Activated CD4-positive, alpha-beta T cell treated with anti-CD3 and anti-CD28 coated beads for 36 hours (primary cell): ENCODE measurements at regions of chr16 and their contacts with region 1.

Region 1: DNA sequence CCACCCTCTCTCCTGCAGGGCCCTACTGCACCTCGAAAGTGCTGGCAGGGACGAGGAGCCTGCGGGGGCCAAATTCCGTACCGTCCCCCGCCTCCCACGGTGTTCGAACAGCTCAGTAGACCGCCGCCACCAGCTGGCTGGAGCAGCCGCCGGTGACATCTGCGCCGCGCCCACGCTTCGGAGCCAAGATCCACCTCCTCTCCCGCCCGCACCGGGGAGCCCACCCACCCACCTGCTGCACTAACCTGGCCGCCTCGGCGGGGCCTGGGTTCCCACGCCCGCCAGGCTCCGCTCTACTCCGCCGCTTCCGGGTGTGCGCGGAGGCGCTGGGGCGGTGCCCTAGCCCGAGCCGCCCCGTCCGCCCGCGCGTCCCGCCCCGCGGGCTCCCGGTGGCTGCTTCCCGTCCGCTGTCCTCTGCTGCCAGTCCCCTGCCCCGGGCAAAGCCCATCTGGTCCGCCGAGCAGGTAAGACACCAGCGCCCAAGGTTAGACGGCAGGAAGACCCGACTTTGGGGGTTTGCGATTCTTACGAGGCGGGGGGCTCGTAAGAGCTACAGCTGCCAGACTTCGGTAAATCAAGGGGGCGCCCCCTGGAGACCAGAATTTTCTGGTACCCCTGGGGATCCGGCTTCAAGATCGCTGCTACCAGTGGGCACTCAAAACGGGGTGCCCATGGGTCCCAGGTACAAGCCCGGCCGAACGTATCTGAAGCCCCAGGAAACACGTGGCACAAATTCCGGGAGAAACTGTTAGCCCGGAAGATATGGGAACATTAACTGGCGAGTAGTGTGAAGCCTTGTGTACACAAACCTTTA is at the starts of genes FBXL8 and TRADD:
- DNase-seq: peak; percentile 88
- ATAC-seq: peak; percentile 63
- H3K4me3 Mint-ChIP-seq: peak within 1 kb of the TSS; percentile 91
- H3K27ac Mint-ChIP-seq: peak within 1 kb of the TSS; percentile 93
- H3K4me1 Mint-ChIP-seq: peaks cover 48% of the 10 kb centered on the region
- H3K27me3 Mint-ChIP-seq: peaks cover 12% of the 10 kb centered on the region
- total RNA-seq, gene FBXL8: 15.5 to 21.0 TPM
- total RNA-seq, gene TRADD: 22.0 to 34.0 TPM

Region 2: GRCh38 chr16:66947302-66948065 is 212.3 kb before region 1 on chr16:
- CTCF ChIA-PET with region 1: interaction called, 10 read pairs
- POLR2A ChIA-PET with region 1: interaction called, 4 read pairs
- intact Hi-C with region 1: loop called (anchors 2 kb)
- DNase-seq: peak; percentile 92
- ATAC-seq: peak; percentile 92
- H3K4me3 Mint-ChIP-seq: peak overlapping the region; percentile 67
- H3K27ac Mint-ChIP-seq: no peak overlapping the region
- H3K4me1 Mint-ChIP-seq: peaks cover 22% of the 10 kb centered on the region
- H3K27me3 Mint-ChIP-seq: peaks cover 29% of the 10 kb centered on the region

Region 3: DNA sequence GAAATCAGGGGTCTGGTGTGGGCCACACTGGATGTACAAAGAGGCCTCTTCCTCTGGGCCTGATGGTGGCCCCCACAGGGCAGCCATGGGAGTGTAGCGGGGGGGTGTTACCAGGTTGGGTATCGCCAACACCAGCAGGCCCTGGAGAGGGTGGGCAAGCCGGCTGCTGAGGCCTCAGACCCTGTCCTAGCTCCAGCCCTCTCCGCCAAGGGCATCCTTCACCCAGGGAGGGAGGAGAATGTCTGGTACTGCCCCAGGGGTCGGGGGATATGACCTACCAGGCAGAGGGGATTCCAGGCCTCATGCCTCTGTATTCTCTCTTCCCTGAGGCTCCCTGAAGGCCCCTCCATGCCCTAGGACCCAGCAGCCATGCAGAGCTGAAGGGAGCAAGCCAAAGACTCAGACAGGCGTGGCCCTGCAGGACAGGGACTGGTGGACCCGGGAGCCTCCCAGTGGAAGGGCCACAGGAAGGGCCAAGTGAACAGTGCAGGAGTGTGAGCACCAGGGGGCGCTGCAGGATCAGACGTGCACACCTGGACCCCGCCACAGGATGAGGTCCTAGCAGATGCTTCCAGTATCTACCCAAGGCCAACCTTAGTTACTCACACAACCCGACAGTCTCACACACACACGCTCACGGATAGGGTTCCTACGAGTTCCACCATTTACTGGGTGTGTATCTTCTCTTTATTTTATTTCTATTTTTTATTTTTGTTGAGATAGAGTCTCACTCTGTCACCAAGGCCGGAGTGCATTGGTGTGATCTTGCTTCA is 182.3 kb before region 1 on chr16:
- CTCF ChIA-PET with region 1: interaction called, 14 read pairs
- POLR2A ChIA-PET with region 1: no interaction called
- intact Hi-C with region 1: loop called (anchors 1 kb)
- DNase-seq: peak; percentile 96
- ATAC-seq: peak; percentile 97
- H3K4me3 Mint-ChIP-seq: no peak overlapping the region
- H3K27ac Mint-ChIP-seq: peak overlapping the region; percentile 31
- H3K4me1 Mint-ChIP-seq: peaks cover 31% of the 10 kb centered on the region
- H3K27me3 Mint-ChIP-seq: peaks cover 3% of the 10 kb centered on the region

Region 4: DNA sequence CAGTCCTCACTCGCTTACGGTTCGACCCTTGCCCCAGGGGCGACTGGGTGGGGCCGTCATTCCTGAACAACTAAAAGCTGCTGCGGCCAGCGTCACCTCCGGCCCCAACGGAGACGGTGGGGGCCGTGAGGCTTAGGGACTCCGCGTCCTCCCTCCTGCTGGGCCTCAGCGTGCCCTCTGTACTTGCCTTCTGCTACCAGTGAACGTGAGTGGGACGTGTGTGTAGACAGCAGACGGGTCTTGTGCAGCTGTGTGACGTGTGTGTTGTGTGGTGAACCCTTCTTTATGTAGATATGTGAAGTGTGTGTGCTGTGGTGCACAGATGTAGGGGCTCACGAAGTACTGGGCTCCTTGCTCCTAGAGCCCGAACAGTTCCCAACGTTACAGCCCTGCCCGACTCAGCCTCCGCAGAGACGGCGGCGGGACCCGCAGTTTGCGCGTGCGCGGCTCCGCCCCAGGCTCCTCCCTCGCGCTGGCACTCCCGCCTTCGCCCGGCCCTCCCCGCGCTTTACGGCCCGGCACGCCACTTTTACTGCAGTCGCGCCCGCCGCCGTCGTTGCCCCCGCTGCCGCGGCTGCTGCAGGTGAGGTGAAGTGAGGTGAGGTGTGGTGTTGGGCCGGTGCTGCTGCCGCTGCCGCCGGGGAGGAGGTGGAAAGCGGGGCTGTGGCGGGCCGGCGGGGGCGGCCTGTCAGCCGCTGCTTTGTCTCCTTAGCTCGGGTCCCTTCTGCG is 50.2 kb before region 1 on chr16 and contains the start of gene PHAF1:
- CTCF ChIA-PET with region 1: interaction called, 9 read pairs
- POLR2A ChIA-PET with region 1: no interaction called
- intact Hi-C with region 1: loop called (anchors 1 to 5 kb)
- DNase-seq: peak; percentile 98
- ATAC-seq: peak; percentile 94
- H3K4me3 Mint-ChIP-seq: peak within 1 kb of the TSS; percentile 94
- H3K27ac Mint-ChIP-seq: peak within 1 kb of the TSS; percentile 85
- H3K4me1 Mint-ChIP-seq: peaks cover 24% of the 10 kb centered on the region
- H3K27me3 Mint-ChIP-seq: no peaks in the 10 kb centered on the region
- total RNA-seq, gene PHAF1: 12.7 to 14.0 TPM

Region 5: DNA sequence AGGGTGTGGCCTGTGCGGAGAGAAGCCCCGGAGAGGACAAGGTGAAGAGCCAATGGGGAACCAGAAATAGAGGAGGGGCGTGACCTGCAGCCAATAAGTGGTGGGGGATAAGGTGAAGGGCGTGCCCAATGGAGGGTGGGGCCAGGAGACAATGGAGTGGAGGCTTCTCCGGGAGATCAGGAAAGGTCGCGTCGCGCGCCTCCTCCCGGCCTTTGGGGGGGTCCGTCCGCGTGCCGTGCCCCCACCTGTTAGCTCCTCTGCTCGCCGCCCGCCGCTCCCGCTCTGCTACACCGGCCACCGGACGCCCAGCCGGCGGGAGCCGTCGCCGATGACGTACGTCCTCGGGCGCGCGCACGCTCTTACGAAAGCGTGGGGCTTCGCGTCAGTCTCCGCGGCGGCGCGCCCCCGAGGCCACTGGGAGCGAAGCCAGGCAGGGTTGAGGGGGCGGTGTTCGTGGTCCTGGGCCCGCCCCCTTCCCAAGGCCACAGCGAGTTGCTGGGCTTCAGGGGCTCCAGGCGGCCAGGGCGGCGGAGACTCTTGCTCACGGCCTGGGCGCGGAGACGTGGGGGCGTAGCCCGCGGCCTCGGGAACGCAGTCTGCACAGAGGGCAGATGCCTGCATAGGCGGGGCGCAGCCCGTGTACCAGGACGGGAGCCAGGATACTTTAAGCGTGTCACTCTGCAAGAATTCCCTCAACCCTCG is 24.0 kb after region 1 on chr16 and contains the start of gene MATCAP1:
- CTCF ChIA-PET with region 1: interaction called, 14 read pairs
- POLR2A ChIA-PET with region 1: interaction called, 3 read pairs
- intact Hi-C with region 1: loop called (anchors 1 kb)
- DNase-seq: peak; percentile 96
- ATAC-seq: peak; percentile 97
- H3K4me3 Mint-ChIP-seq: no peak within 1 kb of the TSS
- H3K27ac Mint-ChIP-seq: no peak within 1 kb of the TSS
- H3K4me1 Mint-ChIP-seq: peaks cover 15% of the 10 kb centered on the region
- H3K27me3 Mint-ChIP-seq: peaks cover 9% of the 10 kb centered on the region
- total RNA-seq, gene MATCAP1: 28.8 to 30.4 TPM

Region 6: DNA sequence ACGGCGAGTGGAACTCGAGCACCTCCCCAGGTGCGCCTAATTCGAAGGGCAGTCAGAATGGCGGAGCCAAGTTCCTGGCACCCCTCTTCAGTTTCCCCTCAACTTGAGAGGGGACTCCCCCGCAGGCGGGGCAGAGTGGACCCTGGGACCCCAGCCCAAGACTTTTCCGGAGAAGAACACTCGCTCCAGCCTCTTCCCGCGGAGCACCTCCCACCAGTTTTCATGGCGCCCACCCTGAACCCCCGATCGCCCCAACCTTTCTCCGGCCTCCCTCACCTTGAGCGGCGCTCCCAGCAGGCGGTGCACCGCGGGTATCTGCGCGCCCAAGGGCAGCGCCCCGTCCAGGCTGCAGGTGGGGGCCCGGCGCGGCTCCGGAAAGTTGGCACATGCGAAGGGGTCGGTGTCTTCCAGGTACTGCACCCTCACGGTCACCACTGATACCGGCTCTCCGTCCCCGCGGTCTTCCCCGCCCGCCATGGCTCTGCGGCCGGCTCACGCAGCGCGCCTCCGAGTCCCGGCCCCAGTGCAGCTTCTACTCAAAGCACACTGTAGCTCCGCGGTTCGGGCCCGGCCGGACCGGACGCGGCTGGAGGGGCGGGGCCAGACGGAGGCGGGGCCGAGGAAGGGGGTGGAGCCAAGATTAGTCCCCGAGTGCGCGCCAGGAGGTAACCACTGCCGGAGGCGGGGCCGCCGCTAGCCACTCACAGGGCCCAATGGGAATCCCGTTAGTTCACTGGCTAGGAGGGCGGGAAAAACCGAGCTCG is 87.3 kb after region 1 on chr16 and contains the start of gene FHOD1:
- CTCF ChIA-PET with region 1: interaction called, 5 read pairs
- POLR2A ChIA-PET with region 1: interaction called, 5 read pairs
- intact Hi-C with region 1: loop called in 1 of 2 experiments (anchors 1 kb)
- DNase-seq: peak; percentile 99
- ATAC-seq: peak; percentile 74
- H3K4me3 Mint-ChIP-seq: peak within 1 kb of the TSS; percentile 87
- H3K27ac Mint-ChIP-seq: peak within 1 kb of the TSS; percentile 85
- H3K4me1 Mint-ChIP-seq: peaks cover 52% of the 10 kb centered on the region
- H3K27me3 Mint-ChIP-seq: peaks cover 11% of the 10 kb centered on the region
- total RNA-seq, gene FHOD1: 75.5 to 77.2 TPM